OCI-LY7 (cell line): ENCODE measurements at regions of chr10 and their contacts with region 1.

Region 1: GRCh38 chr10:6108603-6109443 is 20.0 kb downstream of the RBM17 start:
- DNase-seq: peak; percentile 68
- H3K4me3 ChIP-seq: no peak overlapping the region
- H3K27ac ChIP-seq: no peak overlapping the region
- H3K4me1 ChIP-seq: no peaks in the 10 kb centered on the region
- CTCF ChIP-seq: peak; percentile 91

Region 2: GRCh38 chr10:6130848-6131470 is 22.1 kb after region 1 on chr10:
- CTCF ChIA-PET with region 1: no interaction called
- POLR2A ChIA-PET with region 1: interaction called, 10 read pairs
- intact Hi-C with region 1: no loop called
- DNase-seq: no peak
- H3K4me3 ChIP-seq: no peak overlapping the region
- H3K27ac ChIP-seq: no peak overlapping the region
- H3K4me1 ChIP-seq: peaks cover 16% of the 10 kb centered on the region
- CTCF ChIP-seq: no peak

Region 3: GRCh38 chr10:6151087-6151977 is 42.5 kb after region 1 on chr10:
- CTCF ChIA-PET with region 1: interaction called, 4 read pairs
- POLR2A ChIA-PET with region 1: no interaction called
- intact Hi-C with region 1: loop called (anchors 1 kb)
- DNase-seq: peak; percentile 76
- H3K4me3 ChIP-seq: peak overlapping the region; percentile 43
- H3K27ac ChIP-seq: peak overlapping the region; percentile 40
- H3K4me1 ChIP-seq: peaks cover 18% of the 10 kb centered on the region
- CTCF ChIP-seq: peak; percentile 84

Region 4: GRCh38 chr10:6254201-6254600 is 145.4 kb after region 1 on chr10:
- CTCF ChIA-PET with region 1: no interaction called
- POLR2A ChIA-PET with region 1: no interaction called
- intact Hi-C with region 1: no loop called
- DNase-seq: no peak
- H3K4me3 ChIP-seq: no peak overlapping the region
- H3K27ac ChIP-seq: no peak overlapping the region
- H3K4me1 ChIP-seq: no peaks in the 10 kb centered on the region
- CTCF ChIP-seq: no peak